ENCODE measurements at regions of chr3 and their contacts with region 1.

Region 1: GRCh38 chr3:113051302-113051711 is 60.5 kb downstream of the GTPBP8 start:
- DNase-seq: peak; percentile 72 to 84
- H3K4me3 ChIP-seq: no peak overlapping the region
- H3K4me3 Mint-ChIP-seq: no peak overlapping the region
- H3K27ac Mint-ChIP-seq: no peak overlapping the region
- H3K4me1 ChIP-seq: no peaks in the 10 kb centered on the region
- H3K4me1 Mint-ChIP-seq: no peaks in the 10 kb centered on the region
- H3K27me3 ChIP-seq: no peaks in the 10 kb centered on the region
- H3K27me3 Mint-ChIP-seq: no peaks in the 10 kb centered on the region
- CTCF ChIP-seq: peak; percentile 78 to 91

Region 2: DNA sequence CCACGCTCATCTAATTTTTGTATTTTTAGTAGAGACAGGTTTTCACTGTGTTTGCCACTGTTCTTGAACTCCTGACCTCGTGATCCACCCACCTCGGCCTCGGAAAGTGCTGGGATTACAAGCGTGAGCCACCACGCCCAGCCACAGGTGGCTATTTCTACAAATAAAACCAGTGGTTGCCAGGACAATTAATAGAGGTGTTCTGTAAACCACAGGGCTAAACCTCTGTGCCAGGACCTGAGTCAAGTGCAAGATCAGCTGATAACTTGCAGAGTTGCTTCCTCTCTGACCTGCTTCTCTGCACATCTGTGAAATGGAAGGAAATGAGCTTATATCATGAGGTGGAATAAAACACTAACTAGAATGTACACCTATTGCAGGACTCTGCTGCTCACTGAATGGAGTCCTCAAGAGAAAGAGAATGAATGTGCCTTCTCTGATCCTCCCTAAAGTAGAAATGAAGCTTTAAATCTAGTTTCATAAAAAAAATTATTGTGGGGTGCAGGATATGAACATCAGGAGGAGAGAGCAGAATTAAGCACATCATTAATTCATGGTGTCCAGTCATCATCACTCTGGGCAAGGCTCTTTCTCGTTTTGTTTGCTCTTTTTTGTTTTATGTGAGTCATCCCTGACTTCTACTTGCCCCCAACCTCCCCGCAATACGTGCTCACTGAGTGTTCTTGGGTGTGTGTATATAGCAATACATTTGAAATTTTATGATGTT is 277.3 kb before region 1 on chr3:
- CTCF ChIA-PET with region 1: no interaction called
- POLR2A ChIA-PET with region 1: no interaction called
- intact Hi-C with region 1: no loop called
- DNase-seq: no peak
- H3K4me3 ChIP-seq: no peak overlapping the region
- H3K4me3 Mint-ChIP-seq: no peak overlapping the region
- H3K27ac Mint-ChIP-seq: no peak overlapping the region
- H3K4me1 ChIP-seq: no peaks in the 10 kb centered on the region; the same call in 1 of the 2 replicates
- H3K4me1 Mint-ChIP-seq: peaks cover 6% of the 10 kb centered on the region
- H3K27me3 ChIP-seq: no peaks in the 10 kb centered on the region
- H3K27me3 Mint-ChIP-seq: no peaks in the 10 kb centered on the region
- CTCF ChIP-seq: no peak

Region 3: DNA sequence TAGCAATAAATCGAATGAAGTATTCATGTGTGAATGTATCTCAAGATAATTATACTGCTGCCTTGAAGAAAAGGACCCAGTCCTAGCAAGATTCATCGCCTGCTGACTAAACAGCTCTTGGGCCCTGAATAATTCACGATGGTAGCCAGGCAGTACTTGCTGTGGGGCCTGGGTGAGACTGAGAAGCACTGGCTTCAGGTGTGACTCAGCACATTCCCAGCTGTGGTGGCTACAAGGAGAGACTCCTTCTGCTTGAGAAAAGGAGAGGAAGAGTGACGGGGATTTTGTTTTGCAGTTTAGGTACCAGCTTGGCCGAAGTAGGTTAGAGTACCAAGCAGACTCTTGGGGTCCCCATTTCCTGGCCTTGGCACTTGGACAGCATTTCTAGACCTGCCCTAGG is 157.0 kb before region 1 on chr3:
- CTCF ChIA-PET with region 1: no interaction called
- POLR2A ChIA-PET with region 1: no interaction called
- intact Hi-C with region 1: no loop called
- DNase-seq: peak; percentile 6 to 43
- H3K4me3 ChIP-seq: no peak overlapping the region
- H3K4me3 Mint-ChIP-seq: no peak overlapping the region
- H3K27ac Mint-ChIP-seq: no peak overlapping the region
- H3K4me1 ChIP-seq: no peaks in the 10 kb centered on the region
- H3K4me1 Mint-ChIP-seq: no peaks in the 10 kb centered on the region
- H3K27me3 ChIP-seq: no peaks in the 10 kb centered on the region
- H3K27me3 Mint-ChIP-seq: no peaks in the 10 kb centered on the region
- CTCF ChIP-seq: no peak

Region 4: GRCh38 chr3:113136071-113136470 is 84.8 kb after region 1 on chr3:
- CTCF ChIA-PET with region 1: no interaction called
- POLR2A ChIA-PET with region 1: no interaction called
- intact Hi-C with region 1: loop called (anchors 1 kb)
- DNase-seq: no peak
- H3K4me3 ChIP-seq: no peak overlapping the region
- H3K4me3 Mint-ChIP-seq: no peak overlapping the region
- H3K27ac Mint-ChIP-seq: no peak overlapping the region
- H3K4me1 ChIP-seq: no peaks in the 10 kb centered on the region
- H3K4me1 Mint-ChIP-seq: no peaks in the 10 kb centered on the region
- H3K27me3 ChIP-seq: no peaks in the 10 kb centered on the region
- H3K27me3 Mint-ChIP-seq: peaks cover 4% of the 10 kb centered on the region
- CTCF ChIP-seq: peak; percentile 32 to 45

Region 5: GRCh38 chr3:113287803-113288648 is 236.7 kb after region 1 on chr3:
- CTCF ChIA-PET with region 1: interaction called, 4 read pairs
- POLR2A ChIA-PET with region 1: no interaction called
- intact Hi-C with region 1: loop called (anchors 1 kb)
- DNase-seq: peak in 1 of 2 experiments; percentile 58
- H3K4me3 ChIP-seq: no peak overlapping the region
- H3K4me3 Mint-ChIP-seq: no peak overlapping the region
- H3K27ac Mint-ChIP-seq: no peak overlapping the region
- H3K4me1 ChIP-seq: no peaks in the 10 kb centered on the region
- H3K4me1 Mint-ChIP-seq: peaks cover under 1% of the 10 kb centered on the region
- H3K27me3 ChIP-seq: no peaks in the 10 kb centered on the region; the same call in 1 of the 2 replicates
- H3K27me3 Mint-ChIP-seq: peaks cover 5% of the 10 kb centered on the region
- CTCF ChIP-seq: peak; percentile 95 to 98